ENCODE measurements at regions of chrX and their contacts with region 1.

Region 1: DNA sequence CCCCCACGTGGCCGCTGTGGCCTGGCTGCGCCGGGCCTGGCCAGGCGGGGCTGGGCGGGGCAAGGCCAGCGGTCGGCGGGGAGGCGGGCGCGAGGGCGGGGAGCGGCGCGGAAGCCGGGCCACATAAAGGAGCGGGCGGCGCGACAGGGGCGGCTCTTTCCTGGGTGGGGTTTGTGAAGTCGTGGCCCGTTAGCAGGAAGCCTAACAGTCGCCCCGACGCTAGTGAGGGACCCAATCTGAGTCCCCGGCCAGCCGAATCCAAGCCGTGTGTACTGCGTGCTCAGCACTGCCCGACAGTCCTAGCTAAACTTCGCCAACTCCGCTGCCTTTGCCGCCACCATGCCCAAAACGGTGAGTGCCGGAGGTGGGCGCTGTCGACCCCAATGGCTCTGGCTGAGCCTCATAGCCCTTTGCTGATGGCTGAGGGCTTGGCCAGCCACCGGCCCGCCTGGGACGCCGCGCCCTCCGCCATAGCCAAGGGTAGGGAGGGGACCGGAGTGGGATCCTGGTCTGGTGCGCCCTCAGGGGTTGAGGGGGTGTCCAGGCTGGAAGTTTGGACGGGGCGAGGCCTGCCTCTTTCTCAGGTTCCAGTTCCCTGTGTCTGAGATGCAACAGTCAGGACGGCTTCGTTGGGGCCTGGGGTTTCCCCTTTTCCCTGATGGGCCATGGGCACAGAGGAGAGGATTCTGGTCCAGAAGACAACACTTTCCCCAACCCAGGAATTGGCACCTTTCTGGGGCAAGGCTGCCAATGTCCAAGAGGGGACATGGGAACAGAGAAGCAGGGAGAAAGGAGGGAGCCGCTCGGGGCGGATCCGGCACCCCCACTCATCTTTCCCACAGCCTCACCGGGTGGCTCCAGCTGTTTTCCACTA is at the start of gene MSN:
- DNase-seq: no peak
- ATAC-seq: peak; percentile 84
- H3K4me3 ChIP-seq: peak within 1 kb of the TSS; percentile 90
- H3K27ac ChIP-seq: peak within 1 kb of the TSS; percentile 83
- H3K4me1 ChIP-seq: peaks cover 4% of the 10 kb centered on the region; the same call in 1 of the 2 replicates
- H3K27me3 ChIP-seq: no peaks in the 10 kb centered on the region
- CTCF ChIP-seq: peak; percentile 5 to 14 (median 14); a peak in 1 of 6 replicates
- EP300 ChIP-seq: no peak
- POLR2A ChIP-seq: peak; percentile 85
- RAD21 ChIP-seq: no peak
- polyA plus RNA-seq, gene MSN: 93.8 to 104 TPM

Region 2: DNA sequence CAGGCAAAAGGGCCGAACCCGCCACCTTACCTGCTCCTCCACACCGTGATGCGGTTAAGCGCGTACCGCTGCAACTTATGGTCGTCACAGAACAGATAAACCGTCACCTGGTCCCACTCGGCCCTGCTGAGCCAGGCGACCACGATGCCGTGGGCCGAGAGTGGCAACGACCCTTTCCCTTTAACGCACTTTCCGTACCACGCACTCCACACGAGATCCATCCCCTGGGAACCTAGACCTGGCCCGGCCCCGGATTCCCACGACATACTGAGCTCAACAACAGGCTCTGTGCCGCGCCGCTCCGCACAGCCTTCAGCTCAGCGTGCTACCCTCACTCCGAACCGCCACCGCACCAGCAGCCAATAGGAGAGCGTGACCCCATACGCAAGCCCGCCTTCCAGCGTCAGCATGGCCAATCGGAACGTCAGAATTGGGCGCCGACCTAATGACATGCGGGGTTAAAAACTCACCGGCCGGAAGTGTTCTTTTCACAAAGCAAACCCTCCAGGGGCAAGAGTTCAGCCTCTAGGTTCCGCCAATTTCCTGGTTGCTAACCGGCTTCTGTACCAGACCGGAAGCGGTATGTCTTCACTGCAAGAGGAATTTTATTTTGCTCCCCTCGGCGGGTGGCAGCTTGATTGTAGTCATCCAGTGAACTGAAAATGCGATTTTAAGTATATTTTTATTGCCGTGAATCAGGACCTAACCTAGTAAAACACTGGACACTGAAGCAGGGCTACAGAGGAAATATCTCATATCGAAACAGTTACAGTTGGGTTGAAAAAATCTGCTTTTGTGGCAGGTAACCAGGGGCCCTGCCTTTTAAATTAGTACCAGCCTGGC is 133.1 kb before region 1 on chrX and contains the start of gene LAS1L:
- CTCF ChIA-PET with region 1: no interaction called
- POLR2A ChIA-PET with region 1: no interaction called
- RAD21 ChIA-PET with region 1: no interaction called
- SMC1A ChIA-PET with region 1: no interaction called
- in situ Hi-C with region 1: no loop called
- intact Hi-C with region 1: no loop called
- DNase-seq: peak; percentile 91
- ATAC-seq: peak; percentile 99
- H3K4me3 ChIP-seq: peak within 1 kb of the TSS; percentile 78
- H3K27ac ChIP-seq: peak within 1 kb of the TSS; percentile 43
- H3K4me1 ChIP-seq: no peaks in the 10 kb centered on the region
- H3K27me3 ChIP-seq: no peaks in the 10 kb centered on the region
- CTCF ChIP-seq: no peak
- EP300 ChIP-seq: no peak
- POLR2A ChIP-seq: peak; percentile 94
- RAD21 ChIP-seq: no peak
- polyA plus RNA-seq, gene LAS1L: 27.4 to 43.1 TPM

Region 3: DNA sequence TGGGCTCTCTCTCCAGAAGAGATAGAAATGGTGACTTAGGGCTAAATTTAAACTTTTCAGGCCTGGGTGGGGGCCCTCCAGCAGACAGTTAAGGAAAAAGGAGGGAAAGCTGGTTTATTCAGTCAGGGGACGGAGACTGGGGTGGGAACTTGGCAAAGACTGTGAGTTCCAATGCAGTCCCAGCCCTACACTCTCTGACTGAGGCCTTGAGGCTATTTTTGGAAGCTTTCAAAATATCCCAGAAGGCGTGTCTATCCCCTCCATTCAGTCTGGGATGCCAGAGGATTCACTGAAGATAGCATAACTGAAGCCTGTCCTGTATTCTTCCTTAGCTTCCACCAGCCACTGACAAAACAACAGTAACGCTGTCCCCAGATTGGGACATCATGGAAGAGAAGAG is 32.4 kb before region 1 on chrX:
- CTCF ChIA-PET with region 1: no interaction called
- POLR2A ChIA-PET with region 1: no interaction called
- RAD21 ChIA-PET with region 1: no interaction called
- SMC1A ChIA-PET with region 1: no interaction called
- in situ Hi-C with region 1: no loop called
- intact Hi-C with region 1: no loop called
- DNase-seq: no peak
- ATAC-seq: no peak
- H3K4me3 ChIP-seq: no peak overlapping the region
- H3K27ac ChIP-seq: no peak overlapping the region
- H3K4me1 ChIP-seq: no peaks in the 10 kb centered on the region
- H3K27me3 ChIP-seq: no peaks in the 10 kb centered on the region
- CTCF ChIP-seq: no peak
- EP300 ChIP-seq: no peak
- POLR2A ChIP-seq: no peak
- RAD21 ChIP-seq: no peak

Region 4: GRCh38 chrX:65688403-65688871 is 20.7 kb after region 1 on chrX:
- CTCF ChIA-PET with region 1: interaction called, 23 read pairs
- POLR2A ChIA-PET with region 1: interaction called, 5 read pairs
- RAD21 ChIA-PET with region 1: interaction called, 109 read pairs
- SMC1A ChIA-PET with region 1: interaction called, 112 read pairs
- in situ Hi-C with region 1: no loop called
- intact Hi-C with region 1: no loop called
- DNase-seq: peak; percentile 74
- ATAC-seq: peak; percentile 88
- H3K4me3 ChIP-seq: no peak overlapping the region
- H3K27ac ChIP-seq: peak overlapping the region; percentile 77
- H3K4me1 ChIP-seq: peaks cover 53% of the 10 kb centered on the region
- H3K27me3 ChIP-seq: no peaks in the 10 kb centered on the region
- CTCF ChIP-seq: no peak
- EP300 ChIP-seq: no peak
- POLR2A ChIP-seq: no peak
- RAD21 ChIP-seq: peak; percentile 20; the same call in 1 of the 2 replicates

Region 5: DNA sequence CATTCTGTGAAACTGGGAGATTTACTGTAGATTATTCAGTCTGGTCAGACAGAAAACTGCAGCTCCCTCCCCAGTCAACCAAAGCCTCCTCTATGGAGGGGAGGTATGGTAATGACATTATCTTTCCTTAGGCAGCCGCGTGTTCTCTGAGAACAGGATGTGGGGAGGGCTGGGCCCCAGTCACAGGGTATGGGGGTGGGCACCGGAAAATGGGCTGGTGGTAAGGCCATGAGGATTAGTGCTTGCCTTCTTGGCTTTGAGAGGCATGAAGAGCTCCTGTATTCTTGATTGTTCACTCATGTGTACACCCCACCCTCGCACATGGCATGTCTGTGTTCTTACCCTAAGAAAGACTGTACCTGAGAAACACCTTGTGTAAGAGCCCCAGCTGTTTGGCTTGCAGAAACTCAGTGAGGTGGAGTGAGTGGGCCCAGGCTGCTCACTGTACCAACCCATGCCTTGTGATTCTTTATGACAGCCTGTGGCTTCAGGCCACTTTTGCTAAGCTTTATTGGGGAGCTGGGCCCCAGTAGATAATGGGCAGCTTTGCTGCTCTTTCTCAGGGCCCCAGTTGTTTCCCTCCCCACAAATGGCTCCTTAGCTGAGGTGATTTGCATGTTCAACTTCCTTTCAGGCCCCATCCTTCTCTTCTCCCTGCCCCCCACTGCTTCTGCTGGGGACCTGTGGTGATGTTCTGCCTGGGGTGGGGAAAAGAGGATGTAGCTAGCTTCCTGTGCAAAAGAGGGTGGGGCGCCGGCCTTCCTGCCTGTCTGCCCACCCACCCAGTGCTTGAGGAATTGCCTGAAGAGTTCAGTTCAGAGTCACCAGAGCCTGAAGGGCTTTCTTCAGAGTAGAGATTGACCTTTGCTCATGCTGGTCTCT is 30.4 kb after region 1 on chrX:
- CTCF ChIA-PET with region 1: interaction called, 9 read pairs
- POLR2A ChIA-PET with region 1: interaction called, 17 read pairs
- RAD21 ChIA-PET with region 1: interaction called, 109 read pairs
- SMC1A ChIA-PET with region 1: interaction called, 25 read pairs
- in situ Hi-C with region 1: no loop called
- intact Hi-C with region 1: loop called (anchors 5 kb)
- DNase-seq: peak; percentile 83
- ATAC-seq: peak; percentile 72
- H3K4me3 ChIP-seq: peak overlapping the region; percentile 10; the same call in 1 of the 2 replicates
- H3K27ac ChIP-seq: peak overlapping the region; percentile 87
- H3K4me1 ChIP-seq: peaks cover 59% of the 10 kb centered on the region
- H3K27me3 ChIP-seq: no peaks in the 10 kb centered on the region
- CTCF ChIP-seq: no peak
- EP300 ChIP-seq: peak; percentile 12 to 54; a peak in 1 of 4 replicates
- POLR2A ChIP-seq: peak; percentile 55; the same call in 1 of the 2 replicates
- RAD21 ChIP-seq: no peak

Region 6: DNA sequence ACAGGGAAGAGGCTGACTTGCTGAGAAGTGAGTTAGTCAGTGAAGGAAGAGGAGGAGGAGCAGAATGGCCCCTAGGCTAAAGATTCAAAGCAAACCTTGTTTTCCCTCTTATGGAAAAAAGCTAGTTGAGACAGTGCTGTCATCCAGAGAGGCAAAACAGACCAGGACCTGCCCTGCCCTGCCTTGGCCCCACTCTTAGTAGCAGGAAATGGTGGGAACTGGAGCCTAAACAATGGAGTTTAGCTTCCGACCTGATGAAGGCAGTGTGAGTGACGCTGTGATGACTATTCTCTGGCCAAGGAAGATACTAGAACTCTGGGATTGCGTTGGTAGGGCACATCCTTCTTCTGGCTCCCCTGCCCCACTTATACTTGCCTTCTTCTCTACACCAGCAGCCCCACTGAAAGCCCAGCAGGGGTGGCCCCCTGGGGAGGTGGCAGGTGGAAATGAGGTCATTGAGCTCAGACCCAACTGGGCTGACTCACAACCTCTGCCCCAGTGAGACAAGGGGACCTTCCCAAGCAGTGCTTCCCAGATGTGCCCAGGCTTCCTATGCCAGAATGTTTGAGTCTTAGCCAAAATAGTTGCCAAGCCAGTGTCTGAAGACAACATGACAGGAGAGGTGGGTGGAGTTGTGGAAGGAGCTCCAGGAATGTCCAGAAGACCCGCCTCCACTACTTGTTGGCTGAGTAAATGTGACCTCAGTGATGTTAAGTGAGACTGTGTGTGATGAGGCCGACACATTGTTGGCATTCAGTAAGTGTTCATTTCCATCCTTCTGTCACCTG is 38.5 kb after region 1 on chrX:
- CTCF ChIA-PET with region 1: interaction called, 4 read pairs
- POLR2A ChIA-PET with region 1: interaction called, 3 read pairs
- RAD21 ChIA-PET with region 1: interaction called, 11 read pairs
- SMC1A ChIA-PET with region 1: interaction called, 12 read pairs
- in situ Hi-C with region 1: no loop called
- intact Hi-C with region 1: loop called (anchors 5 kb)
- DNase-seq: no peak
- ATAC-seq: peak; percentile 77
- H3K4me3 ChIP-seq: no peak overlapping the region
- H3K27ac ChIP-seq: peak overlapping the region; percentile 29
- H3K4me1 ChIP-seq: peaks cover 33% of the 10 kb centered on the region
- H3K27me3 ChIP-seq: no peaks in the 10 kb centered on the region
- CTCF ChIP-seq: no peak
- EP300 ChIP-seq: no peak
- POLR2A ChIP-seq: peak; percentile 34; the same call in 1 of the 2 replicates
- RAD21 ChIP-seq: no peak